Heart right ventricle (tissue), 16 donors: ENCODE measurements at regions of chr10 and their contacts with region 1.

Region 1: DNA sequence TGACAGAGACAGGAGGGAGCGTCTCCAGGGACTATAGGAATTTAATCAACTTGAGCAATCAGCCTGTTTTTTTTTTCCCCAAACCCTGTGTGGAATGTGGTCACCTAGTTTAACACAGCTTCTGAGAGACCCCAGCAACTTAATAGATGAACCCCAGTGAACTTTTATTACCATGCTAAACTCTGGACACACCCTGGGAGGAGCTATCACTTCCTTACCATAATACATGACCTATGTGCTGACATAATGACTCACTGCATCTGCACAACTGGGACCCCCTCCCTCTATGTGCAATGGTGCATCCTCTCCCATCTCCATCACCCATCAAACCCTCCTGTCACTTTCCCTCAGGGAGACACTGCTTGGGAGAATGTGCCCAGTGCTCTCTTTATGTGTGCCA is 83.7 kb downstream of the EPC1 start:
- DNase-seq: no peak
- ATAC-seq: peak in 1 of 8 donors; percentile 25
- H3K4me3 ChIP-seq: no peak overlapping the region
- H3K27ac ChIP-seq: no peak overlapping the region
- H3K4me1 ChIP-seq: peaks cover 0 to 2% (median 0%) of the 10 kb centered on the region in 9 donors
- H3K27me3 ChIP-seq: no peaks in the 10 kb centered on the region
- CTCF ChIP-seq: no peak

Region 2: DNA sequence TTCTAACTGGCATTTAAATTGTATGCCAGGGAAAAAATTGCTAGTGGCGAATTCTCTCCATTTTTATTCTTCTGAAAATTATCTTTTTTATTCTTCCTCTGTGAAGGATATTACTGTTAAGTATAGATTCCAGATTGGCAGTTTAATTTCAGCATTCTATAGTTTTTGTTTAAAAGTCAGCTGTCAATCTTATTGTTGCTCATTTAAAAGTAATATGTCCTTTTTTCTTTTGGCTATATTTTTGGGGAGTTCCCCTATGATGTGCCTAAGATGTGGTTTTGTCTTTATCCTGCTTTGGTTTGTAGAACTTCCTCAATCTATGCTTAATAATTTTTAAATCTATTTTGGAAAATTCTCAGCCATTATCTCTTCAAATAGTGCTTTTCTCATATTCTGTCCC is 470.6 kb before region 1 on chr10:
- intact Hi-C with region 1: no loop called
- DNase-seq: no peak
- ATAC-seq: no peak
- H3K4me3 ChIP-seq: no peak overlapping the region
- H3K27ac ChIP-seq: no peak overlapping the region
- H3K4me1 ChIP-seq: no peaks in the 10 kb centered on the region
- H3K27me3 ChIP-seq: no peaks in the 10 kb centered on the region
- CTCF ChIP-seq: no peak

Region 3: GRCh38 chr10:31990937-31991336 is 272.4 kb before region 1 on chr10:
- intact Hi-C with region 1: no loop called
- DNase-seq: no peak
- ATAC-seq: no peak
- H3K4me3 ChIP-seq: no peak overlapping the region
- H3K27ac ChIP-seq: no peak overlapping the region
- H3K4me1 ChIP-seq: no peaks in the 10 kb centered on the region
- H3K27me3 ChIP-seq: no peaks in the 10 kb centered on the region
- CTCF ChIP-seq: no peak

Region 4: GRCh38 chr10:32433542-32433941 is 170.2 kb after region 1 on chr10:
- intact Hi-C with region 1: no loop called
- DNase-seq: no peak
- ATAC-seq: no peak
- H3K4me3 ChIP-seq: no peak overlapping the region
- H3K27ac ChIP-seq: no peak overlapping the region
- H3K4me1 ChIP-seq: no peaks in the 10 kb centered on the region
- H3K27me3 ChIP-seq: no peaks in the 10 kb centered on the region
- CTCF ChIP-seq: no peak

Region 5: GRCh38 chr10:32459051-32459698 is 195.9 kb after region 1 on chr10:
- intact Hi-C with region 1: loop called in 1 of 10 experiments (anchors 10 kb)
- DNase-seq: no peak
- ATAC-seq: no peak
- H3K4me3 ChIP-seq: no peak overlapping the region
- H3K27ac ChIP-seq: no peak overlapping the region
- H3K4me1 ChIP-seq: no peaks in the 10 kb centered on the region
- H3K27me3 ChIP-seq: no peaks in the 10 kb centered on the region
- CTCF ChIP-seq: no peak

Region 6: DNA sequence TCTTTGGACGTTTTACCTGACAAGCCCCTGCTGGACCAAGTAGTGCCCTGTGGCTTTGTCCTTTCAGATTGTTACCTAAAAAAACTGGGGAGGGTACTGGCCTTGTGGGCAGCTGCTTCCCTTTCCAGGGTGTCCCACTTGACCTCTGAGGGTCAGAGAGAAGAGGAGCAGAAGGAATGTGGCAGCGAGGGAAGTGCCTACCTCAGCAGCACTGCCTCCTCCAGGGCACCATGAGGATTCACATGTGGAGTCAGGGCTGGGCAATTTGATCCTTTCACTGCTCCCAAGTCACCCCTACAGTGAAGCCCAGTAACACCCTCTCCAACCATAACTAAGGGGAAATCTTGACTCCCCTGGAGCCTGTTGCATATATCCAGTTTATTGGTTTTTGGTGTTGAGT is 630.1 kb after region 1 on chr10:
- intact Hi-C with region 1: no loop called
- DNase-seq: no peak
- ATAC-seq: peak in 1 of 8 donors; percentile 48
- H3K4me3 ChIP-seq: no peak overlapping the region
- H3K27ac ChIP-seq: no peak overlapping the region
- H3K4me1 ChIP-seq: peaks cover 0 to 5% (median 0%) of the 10 kb centered on the region in 9 donors
- H3K27me3 ChIP-seq: no peaks in the 10 kb centered on the region
- CTCF ChIP-seq: no peak